K562 (cell line): ENCODE measurements at regions of chr2 and their contacts with region 1.

Region 1: GRCh38 chr2:120206022-120206581 is 17.1 kb downstream of the TMEM185B start:
- DNase-seq: peak; percentile 56 to 62 (median 58)
- ATAC-seq: peak; percentile 86
- H3K4me3 ChIP-seq: no peak overlapping the region
- H3K27ac ChIP-seq: no peak overlapping the region
- H3K4me1 ChIP-seq: peaks cover 0 to 9% of the 10 kb centered on the region in 2 experiments; a peak in 2 of 5 replicates
- H3K27me3 ChIP-seq: peaks cover 2 to 20% of the 10 kb centered on the region in 2 experiments; a peak in 4 of 5 replicates
- CTCF ChIP-seq: peak; percentile 72 to 85 (median 76)
- EP300 ChIP-seq: no peak
- POLR2A ChIP-seq: no peak
- RAD21 ChIP-seq: peak; percentile 38 to 73; a peak in 3 of 4 replicates

Region 2: GRCh38 chr2:120294008-120294340 is 87.9 kb after region 1 on chr2:
- CTCF ChIA-PET with region 1: no interaction called
- POLR2A ChIA-PET with region 1: no interaction called
- in situ Hi-C with region 1: loop called (anchors 5 kb)
- intact Hi-C with region 1: no loop called
- DNase-seq: no peak
- ATAC-seq: no peak
- H3K4me3 ChIP-seq: no peak overlapping the region
- H3K27ac ChIP-seq: no peak overlapping the region
- H3K4me1 ChIP-seq: peaks cover 9 to 23% of the 10 kb centered on the region in 2 experiments; a peak in 4 of 5 replicates
- H3K27me3 ChIP-seq: no peaks in the 10 kb centered on the region
- CTCF ChIP-seq: no peak
- EP300 ChIP-seq: no peak
- POLR2A ChIP-seq: no peak
- RAD21 ChIP-seq: no peak